Mammary epithelial cell (primary cell): ENCODE measurements at regions of chr22 and their contacts with region 1.

Region 1: DNA sequence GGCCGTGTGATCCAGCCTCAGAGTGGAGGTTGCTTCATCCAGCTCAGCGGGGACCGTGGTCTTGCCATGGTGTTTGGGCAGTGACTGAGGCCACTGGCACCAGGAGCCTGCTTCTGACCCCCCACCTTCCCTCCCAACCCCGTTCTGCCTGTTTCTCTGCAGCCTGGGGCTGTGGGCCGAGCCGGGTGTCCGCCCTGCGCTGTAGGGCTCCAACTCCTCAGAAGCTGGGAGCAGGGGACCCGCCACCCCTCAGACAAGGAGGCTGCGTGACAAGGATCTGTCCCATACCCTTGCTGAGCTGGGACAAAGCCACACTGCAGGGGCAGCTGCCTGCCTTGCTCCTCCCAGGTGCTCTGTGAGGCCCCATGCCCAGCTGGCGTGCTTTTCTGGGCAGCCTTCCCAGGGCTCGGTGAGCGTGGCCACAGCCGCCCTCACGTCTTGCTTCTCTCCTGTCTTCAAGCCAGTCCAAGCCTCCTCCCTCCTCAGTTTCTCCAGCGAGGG is 11.7 kb upstream of the ARFGAP3 start:
- DNase-seq: no peak
- H3K4me3 ChIP-seq: no peak overlapping the region
- H3K27ac ChIP-seq: no peak overlapping the region
- H3K4me1 ChIP-seq: peaks cover 4% of the 10 kb centered on the region
- H3K27me3 ChIP-seq: no peaks in the 10 kb centered on the region
- CTCF ChIP-seq: no peak

Region 2: GRCh38 chr22:42906605-42907348 is 38.0 kb after region 1 on chr22:
- CTCF ChIA-PET with region 1: no interaction called
- dilution Hi-C with region 1: loop called (anchors 5 kb)
- in situ Hi-C with region 1: no loop called
- intact Hi-C with region 1: no loop called
- DNase-seq: no peak
- H3K4me3 ChIP-seq: no peak overlapping the region
- H3K27ac ChIP-seq: no peak overlapping the region
- H3K4me1 ChIP-seq: peaks cover 30% of the 10 kb centered on the region
- H3K27me3 ChIP-seq: no peaks in the 10 kb centered on the region
- CTCF ChIP-seq: no peak

Region 3: DNA sequence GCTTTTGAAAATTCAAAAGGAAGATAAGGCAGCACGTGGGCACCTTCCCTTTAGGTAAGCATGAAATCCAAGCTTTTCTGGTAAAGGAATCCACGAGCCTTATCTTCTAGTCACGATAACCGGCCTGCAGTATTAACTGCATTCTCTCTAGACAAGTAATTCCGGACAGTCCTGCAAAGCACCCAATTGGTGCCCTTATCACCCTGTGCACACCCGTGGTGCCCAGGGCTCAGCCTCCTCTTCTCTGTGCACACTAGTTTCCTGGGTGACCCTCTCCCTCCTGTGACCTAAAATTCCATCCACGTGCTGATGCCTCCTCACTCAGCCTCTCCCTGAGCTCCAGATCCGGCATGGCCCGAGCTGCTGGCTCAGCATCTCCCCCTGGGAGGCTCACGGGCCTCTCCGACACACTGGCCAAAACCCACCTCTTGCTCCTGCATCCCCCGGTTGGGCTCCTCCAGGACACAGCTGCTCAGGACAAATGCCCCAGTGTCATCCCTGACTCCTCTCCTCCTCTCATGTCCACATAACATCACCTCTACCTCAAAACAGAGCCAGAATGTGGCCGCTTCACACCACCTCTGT is 82.4 kb after region 1 on chr22:
- CTCF ChIA-PET with region 1: no interaction called
- dilution Hi-C with region 1: loop called (anchors 5 kb)
- in situ Hi-C with region 1: no loop called
- intact Hi-C with region 1: loop called (anchors 5 kb)
- DNase-seq: no peak
- H3K4me3 ChIP-seq: no peak overlapping the region
- H3K27ac ChIP-seq: no peak overlapping the region
- H3K4me1 ChIP-seq: peaks cover 42% of the 10 kb centered on the region
- H3K27me3 ChIP-seq: no peaks in the 10 kb centered on the region
- CTCF ChIP-seq: no peak